MCF 10A (cell line): ENCODE measurements at regions of chr7 and their contacts with region 1.

Region 1: GRCh38 chr7:17063045-17063383 is 181.2 kb upstream of the AGR3 start:
- DNase-seq: peak; percentile 23
- H3K4me3 Mint-ChIP-seq: no peak overlapping the region
- H3K27ac Mint-ChIP-seq: no peak overlapping the region
- H3K4me1 Mint-ChIP-seq: no peaks in the 10 kb centered on the region
- H3K27me3 Mint-ChIP-seq: no peaks in the 10 kb centered on the region
- CTCF ChIP-seq: peak; percentile 26

Region 2: GRCh38 chr7:17234398-17235031 is 171.5 kb after region 1 on chr7:
- CTCF ChIA-PET with region 1: interaction called, 3 read pairs
- POLR2A ChIA-PET with region 1: no interaction called
- intact Hi-C with region 1: loop called (anchors 1 kb)
- DNase-seq: peak; percentile 92
- H3K4me3 Mint-ChIP-seq: peak overlapping the region; percentile 31
- H3K27ac Mint-ChIP-seq: peak overlapping the region; percentile 96
- H3K4me1 Mint-ChIP-seq: peaks cover 35% of the 10 kb centered on the region
- H3K27me3 Mint-ChIP-seq: no peaks in the 10 kb centered on the region
- CTCF ChIP-seq: no peak

Region 3: DNA sequence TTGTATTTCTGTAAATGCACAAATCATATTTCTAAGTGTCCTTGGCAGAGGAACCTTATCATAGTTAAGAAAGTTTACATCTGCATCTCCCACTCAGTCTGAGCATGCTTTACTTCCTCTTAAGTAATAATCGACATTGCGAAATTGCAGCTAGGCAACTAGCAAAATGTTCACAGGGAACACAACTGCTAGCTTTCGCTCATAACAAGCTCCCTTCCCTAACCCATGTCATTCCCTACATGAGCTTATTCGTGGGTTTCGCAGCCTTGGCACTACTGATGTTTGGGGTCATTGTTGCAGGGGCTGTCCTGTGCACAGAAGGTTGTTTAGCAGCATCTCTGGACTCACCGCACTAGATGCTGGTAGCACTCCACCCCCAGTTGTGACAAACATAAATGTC is 307.1 kb after region 1 on chr7:
- CTCF ChIA-PET with region 1: no interaction called
- POLR2A ChIA-PET with region 1: no interaction called
- intact Hi-C with region 1: no loop called
- DNase-seq: peak; percentile 94
- H3K4me3 Mint-ChIP-seq: peak overlapping the region; percentile 9
- H3K27ac Mint-ChIP-seq: peak overlapping the region; percentile 89
- H3K4me1 Mint-ChIP-seq: peaks cover 27% of the 10 kb centered on the region
- H3K27me3 Mint-ChIP-seq: no peaks in the 10 kb centered on the region
- CTCF ChIP-seq: no peak